ENCODE measurements at regions of chr6 and their contacts with region 1.

Region 1: DNA sequence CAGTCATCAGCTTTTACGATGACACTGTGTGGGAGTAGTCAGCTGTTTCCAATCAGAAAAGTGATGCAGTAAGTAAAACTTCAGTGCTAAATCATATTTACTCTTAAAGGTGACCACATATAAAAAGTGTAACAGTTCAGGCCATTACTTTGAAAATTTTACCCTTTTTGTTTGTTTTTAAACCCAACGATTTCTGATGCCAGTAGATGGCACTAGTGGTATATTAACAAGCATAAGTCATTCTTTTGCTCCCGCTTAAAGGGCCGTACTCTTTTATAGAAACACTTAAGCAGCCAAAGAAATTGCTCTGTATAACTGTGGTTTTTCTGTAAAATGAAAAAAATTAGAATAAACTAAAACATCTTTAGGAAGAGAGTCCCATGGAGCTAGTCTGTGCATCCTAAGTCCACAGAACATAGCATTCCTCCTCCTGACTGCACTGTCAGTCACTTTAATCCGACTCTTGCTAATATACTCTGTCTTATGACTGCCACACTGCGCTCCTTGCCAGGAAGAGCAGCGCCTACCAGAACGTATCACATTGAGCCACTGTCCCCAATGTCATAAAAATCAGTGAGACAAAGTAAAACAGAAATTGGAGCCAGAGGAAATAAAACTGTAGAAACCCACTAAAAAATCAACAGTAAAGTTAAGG is 25.0 kb downstream of the HEBP2 start:
- DNase-seq: peak in 7 of 9 donors; percentile 28 to 62 (median 43)
- ATAC-seq: peak; percentile 71
- H3K4me3 ChIP-seq: no peak overlapping the region
- H3K4me3 Mint-ChIP-seq: no peak overlapping the region
- H3K27ac ChIP-seq: no peak overlapping the region
- H3K27ac Mint-ChIP-seq: no peak overlapping the region
- H3K4me1 ChIP-seq: no peaks in the 10 kb centered on the region
- H3K4me1 Mint-ChIP-seq: peaks cover 0 to 6% (median 0%) of the 10 kb centered on the region in 7 donors
- H3K27me3 ChIP-seq: no peaks in the 10 kb centered on the region
- H3K27me3 Mint-ChIP-seq: peaks cover 0 to 7% (median 5%) of the 10 kb centered on the region in 5 donors

Region 2: DNA sequence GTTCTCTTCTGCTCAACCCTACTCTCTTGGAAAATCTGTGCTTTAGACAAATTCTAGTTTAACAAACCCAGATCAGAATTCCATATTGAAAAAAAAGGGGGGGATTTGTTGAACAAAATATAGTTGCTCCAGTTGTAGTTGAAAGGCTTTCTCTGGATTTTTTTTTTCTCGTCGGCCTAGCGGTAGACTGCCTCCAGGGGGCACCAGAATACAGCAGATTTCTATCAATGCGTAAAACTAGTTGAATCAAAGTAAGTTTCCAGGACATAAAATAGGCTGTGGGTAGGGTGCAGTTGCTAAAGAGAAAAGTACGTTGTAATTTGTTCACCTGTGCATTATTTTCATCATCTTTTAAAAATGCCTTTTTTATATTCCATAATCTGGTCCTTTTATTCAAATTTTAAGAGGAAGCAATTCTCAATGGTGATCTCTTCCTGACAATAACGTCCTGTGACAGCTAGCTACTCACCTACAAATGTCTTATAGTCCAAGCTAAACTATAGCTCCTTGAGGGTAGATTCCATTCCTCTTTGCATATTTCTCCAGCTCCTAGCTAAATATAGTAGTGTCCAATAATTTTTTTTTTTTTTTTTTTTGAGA is 427.2 kb before region 1 on chr6:
- CTCF ChIA-PET with region 1: no interaction called
- POLR2A ChIA-PET with region 1: no interaction called
- intact Hi-C with region 1: loop called in 1 of 2 experiments (anchors 5 kb)
- DNase-seq: peak in 8 of 9 donors; percentile 37 to 65 (median 56)
- ATAC-seq: peak; percentile 79
- H3K4me3 ChIP-seq: no peak overlapping the region
- H3K4me3 Mint-ChIP-seq: no peak overlapping the region
- H3K27ac ChIP-seq: no peak overlapping the region
- H3K27ac Mint-ChIP-seq: peak overlapping the region in 1 of 9 donors; percentile 27
- H3K4me1 ChIP-seq: no peaks in the 10 kb centered on the region
- H3K4me1 Mint-ChIP-seq: peaks cover 0 to 16% (median 5%) of the 10 kb centered on the region in 7 donors
- H3K27me3 ChIP-seq: no peaks in the 10 kb centered on the region
- H3K27me3 Mint-ChIP-seq: peaks cover 0 to 11% (median 0%) of the 10 kb centered on the region in 5 donors

Region 3: GRCh38 chr6:138455746-138456400 is 26.8 kb after region 1 on chr6:
- CTCF ChIA-PET with region 1: interaction called, 26 read pairs
- POLR2A ChIA-PET with region 1: interaction called, 12 read pairs
- intact Hi-C with region 1: loop called in 1 of 2 experiments (anchors 2 kb)
- DNase-seq: peak in 7 of 9 donors; percentile 51 to 81 (median 75)
- ATAC-seq: peak; percentile 86
- H3K4me3 ChIP-seq: peak overlapping the region; percentile 48
- H3K4me3 Mint-ChIP-seq: peak overlapping the region; percentile 40 to 79 (median 70)
- H3K27ac ChIP-seq: peak overlapping the region; percentile 75
- H3K27ac Mint-ChIP-seq: peak overlapping the region; percentile 77 to 97 (median 93)
- H3K4me1 ChIP-seq: peaks cover 19 to 22% of the 10 kb centered on the region in 2 donors
- H3K4me1 Mint-ChIP-seq: peaks cover 5 to 32% (median 22%) of the 10 kb centered on the region in 7 donors
- H3K27me3 ChIP-seq: no peaks in the 10 kb centered on the region
- H3K27me3 Mint-ChIP-seq: peaks cover 0 to 3% (median 0%) of the 10 kb centered on the region in 5 donors

Region 4: GRCh38 chr6:138517635-138518034 is 88.6 kb after region 1 on chr6:
- CTCF ChIA-PET with region 1: interaction called, 120 read pairs
- POLR2A ChIA-PET with region 1: no interaction called
- intact Hi-C with region 1: loop called (anchors 1 kb)
- DNase-seq: peak; percentile 15 to 63 (median 40)
- ATAC-seq: peak; percentile 80
- H3K4me3 ChIP-seq: no peak overlapping the region
- H3K4me3 Mint-ChIP-seq: no peak overlapping the region
- H3K27ac ChIP-seq: no peak overlapping the region
- H3K27ac Mint-ChIP-seq: no peak overlapping the region
- H3K4me1 ChIP-seq: peaks cover 0 to 13% of the 10 kb centered on the region in 2 donors
- H3K4me1 Mint-ChIP-seq: peaks cover 0 to 23% (median 7%) of the 10 kb centered on the region in 7 donors
- H3K27me3 ChIP-seq: no peaks in the 10 kb centered on the region
- H3K27me3 Mint-ChIP-seq: peaks cover 9 to 17% (median 12%) of the 10 kb centered on the region in 5 donors

Region 5: DNA sequence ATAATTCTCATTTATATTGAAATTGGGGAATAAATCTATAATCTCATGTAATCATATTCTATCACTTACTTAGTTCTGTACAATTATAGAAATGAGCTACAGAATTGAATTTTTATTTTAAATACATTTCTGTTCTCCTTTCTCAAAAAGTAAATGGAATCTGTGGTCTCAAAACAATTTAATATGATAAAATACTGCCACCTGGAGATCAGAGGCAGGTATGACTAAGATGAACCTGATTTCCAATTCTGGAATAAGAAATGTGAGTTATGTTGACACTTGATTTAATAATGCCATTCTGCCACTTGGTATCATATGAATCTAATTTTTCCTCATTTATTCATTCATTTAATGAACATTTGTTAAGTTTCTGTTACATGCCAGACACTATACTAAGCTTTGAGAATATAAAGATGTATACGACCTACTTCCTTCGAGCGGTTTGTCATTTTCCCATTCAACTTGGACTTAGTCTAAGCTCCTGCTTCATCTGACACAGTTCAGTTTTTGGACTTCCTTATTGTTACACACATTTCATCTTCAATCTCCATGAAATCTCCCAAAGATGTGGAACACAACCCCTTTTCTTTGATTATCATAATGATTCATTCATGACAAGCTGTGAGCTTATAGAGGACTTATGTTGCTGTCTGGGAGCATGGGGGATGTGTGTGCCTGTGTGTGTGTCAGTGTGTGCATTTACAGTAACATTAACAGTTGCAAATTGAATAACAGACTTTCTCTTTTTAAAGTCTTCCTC is 337.0 kb after region 1 on chr6:
- CTCF ChIA-PET with region 1: no interaction called
- POLR2A ChIA-PET with region 1: interaction called, 3 read pairs
- intact Hi-C with region 1: loop called (anchors 1 to 10 kb)
- DNase-seq: peak in 5 of 9 donors; percentile 25 to 42 (median 29)
- ATAC-seq: no peak
- H3K4me3 ChIP-seq: no peak overlapping the region
- H3K4me3 Mint-ChIP-seq: no peak overlapping the region
- H3K27ac ChIP-seq: no peak overlapping the region
- H3K27ac Mint-ChIP-seq: peak overlapping the region in 1 of 9 donors; percentile 26
- H3K4me1 ChIP-seq: no peaks in the 10 kb centered on the region
- H3K4me1 Mint-ChIP-seq: peaks cover 0 to 5% (median 0%) of the 10 kb centered on the region in 7 donors
- H3K27me3 ChIP-seq: no peaks in the 10 kb centered on the region
- H3K27me3 Mint-ChIP-seq: no peaks in the 10 kb centered on the region

Measured in naive thymus-derived CD4-positive, alpha-beta T cell (primary cell).